H1 (cell line): ENCODE measurements at regions of chr16 and their contacts with region 1.

Region 1: DNA sequence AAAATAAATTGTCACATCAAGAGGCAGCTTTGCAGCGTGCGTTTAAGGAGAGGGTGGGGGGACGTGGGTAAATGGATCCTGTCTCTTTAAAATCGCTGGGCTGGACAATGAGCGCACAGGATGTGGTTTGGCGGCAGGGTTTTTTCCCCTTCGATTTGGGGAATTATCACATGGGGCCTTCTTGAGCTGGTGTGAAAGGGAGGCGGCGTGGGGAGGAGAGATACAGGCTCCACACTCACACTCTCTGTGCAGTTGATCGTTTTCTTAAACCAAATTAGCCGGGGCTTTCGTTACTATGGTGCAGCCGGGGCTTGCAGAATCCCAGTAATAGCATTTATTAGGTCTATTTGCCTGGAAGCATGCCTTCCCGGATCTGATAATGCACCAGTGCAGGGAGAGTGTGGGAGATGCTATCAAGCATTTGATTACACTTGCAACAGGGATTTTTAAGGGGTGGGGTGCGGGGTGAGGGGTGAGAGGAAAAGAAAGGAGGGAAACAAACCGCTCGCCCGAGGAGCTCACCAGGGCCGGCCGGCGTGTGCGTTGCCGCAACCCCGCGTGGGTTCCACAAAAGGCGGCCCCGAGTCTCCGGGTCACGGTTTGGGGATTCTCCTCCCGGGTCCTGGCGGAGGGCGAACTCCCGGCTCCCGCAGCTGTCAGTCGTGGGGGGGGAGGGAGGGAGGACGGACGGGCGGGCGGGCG is 58.9 kb upstream of the GSE1 start:
- DNase-seq: no peak
- H3K4me3 ChIP-seq: peak overlapping the region; percentile 54 to 98 (median 61)
- H3K27ac ChIP-seq: no peak overlapping the region
- H3K4me1 ChIP-seq: peaks cover 0 to 27% (median 21%) of the 10 kb centered on the region in 4 experiments; a peak in 6 of 7 replicates
- H3K27me3 ChIP-seq: no peaks in the 10 kb centered on the region; a peak in 2 of 7 replicates
- CTCF ChIP-seq: no peak
- EP300 ChIP-seq: no peak
- POLR2A ChIP-seq: no peak
- RAD21 ChIP-seq: no peak

Region 2: GRCh38 chr16:85461814-85462713 is 92.2 kb before region 1 on chr16:
- CTCF ChIA-PET with region 1: interaction called, 10 read pairs
- POLR2A ChIA-PET with region 1: interaction called, 3 read pairs
- DNase-seq: peak in 1 of 2 experiments; percentile 76
- H3K4me3 ChIP-seq: peak overlapping the region; percentile 4 to 57 (median 46)
- H3K27ac ChIP-seq: no peak overlapping the region
- H3K4me1 ChIP-seq: peaks cover 7 to 33% (median 25%) of the 10 kb centered on the region in 4 experiments
- H3K27me3 ChIP-seq: peaks cover 5 to 49% (median 36%) of the 10 kb centered on the region in 4 experiments; a peak in 6 of 7 replicates
- CTCF ChIP-seq: no peak
- EP300 ChIP-seq: no peak
- POLR2A ChIP-seq: no peak
- RAD21 ChIP-seq: no peak

Region 3: DNA sequence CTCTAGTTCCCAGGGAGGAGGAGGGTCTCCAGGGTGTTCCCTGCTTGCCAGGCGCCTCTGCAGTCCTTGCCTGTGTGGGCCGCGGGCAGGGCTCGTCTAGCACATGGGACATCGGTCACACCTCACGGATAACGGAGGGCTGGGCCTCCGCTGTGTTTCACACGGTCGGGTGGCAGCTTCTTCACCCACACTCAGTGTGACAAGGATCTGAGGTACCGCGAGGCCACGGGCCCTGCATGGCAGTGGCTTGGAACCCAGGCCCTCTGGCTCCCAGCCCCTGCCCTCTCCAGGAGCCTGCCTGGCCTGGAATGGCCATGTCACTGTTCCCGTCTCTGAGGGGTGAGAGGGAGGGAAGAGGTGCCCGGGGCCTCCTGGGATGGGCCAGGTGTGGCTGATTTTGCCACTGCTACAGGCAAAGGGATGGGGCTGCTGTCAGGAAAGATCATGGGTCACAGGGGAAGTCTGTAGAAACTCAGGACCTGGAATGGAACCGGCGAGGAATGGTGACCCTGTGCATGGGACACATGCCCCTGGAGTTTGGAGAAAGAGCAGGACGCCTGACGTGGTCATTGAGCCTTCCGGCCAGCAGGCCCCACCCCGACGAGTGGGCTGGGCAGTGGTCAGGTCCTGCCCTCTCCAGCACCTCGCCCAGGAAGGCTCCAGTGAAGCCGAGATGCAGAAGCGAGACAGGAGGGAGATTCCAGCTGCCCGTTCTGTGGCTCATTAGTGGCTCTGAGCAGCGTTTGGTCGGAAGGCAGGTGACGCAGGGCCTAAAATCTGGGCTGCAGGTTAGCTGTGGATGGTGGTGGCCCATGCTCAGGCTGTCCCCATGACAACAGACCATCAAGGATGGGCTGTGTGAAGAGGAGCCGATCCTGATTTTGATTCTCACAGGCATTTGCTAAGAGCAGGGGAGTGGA is 17.6 kb before region 1 on chr16:
- CTCF ChIA-PET with region 1: interaction called, 76 read pairs
- POLR2A ChIA-PET with region 1: interaction called, 6 read pairs
- DNase-seq: no peak
- H3K4me3 ChIP-seq: no peak overlapping the region
- H3K27ac ChIP-seq: no peak overlapping the region
- H3K4me1 ChIP-seq: peaks cover 0 to 5% (median 3%) of the 10 kb centered on the region in 4 experiments; a peak in 5 of 7 replicates
- H3K27me3 ChIP-seq: no peaks in the 10 kb centered on the region
- CTCF ChIP-seq: no peak
- EP300 ChIP-seq: no peak
- POLR2A ChIP-seq: no peak
- RAD21 ChIP-seq: no peak

Region 4: DNA sequence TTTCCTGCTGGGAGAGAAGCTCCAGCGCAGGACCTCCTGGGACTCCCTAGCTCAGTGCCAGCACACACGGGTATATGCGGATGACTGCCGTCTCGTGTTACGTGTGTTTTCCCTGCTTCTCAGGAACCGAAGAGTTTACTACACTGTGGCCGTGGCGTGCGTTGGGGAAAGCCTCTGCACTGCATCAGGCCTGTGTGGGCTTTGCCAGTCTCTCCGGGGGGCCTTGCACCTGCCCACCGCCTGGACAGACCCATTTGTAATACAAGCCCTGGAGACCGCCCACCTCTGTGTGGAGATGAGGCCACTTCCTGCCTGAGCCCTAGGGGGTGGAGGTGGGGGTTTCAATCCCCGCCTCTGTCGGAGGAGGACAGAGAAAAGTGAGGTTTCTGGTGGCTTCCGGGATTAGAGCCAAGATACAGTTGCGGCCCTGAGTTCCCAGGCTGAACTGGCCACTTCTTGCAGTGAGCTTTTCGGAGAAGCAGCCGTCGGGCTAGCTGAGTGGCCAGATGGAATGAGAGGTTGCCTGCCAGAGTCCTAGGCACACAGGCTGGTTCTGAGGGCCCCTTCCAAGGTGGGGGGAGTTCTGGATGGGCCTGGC is 15.5 kb after region 1 on chr16:
- CTCF ChIA-PET with region 1: interaction called, 39 read pairs
- POLR2A ChIA-PET with region 1: interaction called, 9 read pairs
- DNase-seq: no peak
- H3K4me3 ChIP-seq: no peak overlapping the region
- H3K27ac ChIP-seq: no peak overlapping the region; the same call in 1 of the 2 replicates
- H3K4me1 ChIP-seq: peaks cover 24 to 65% (median 41%) of the 10 kb centered on the region in 4 experiments
- H3K27me3 ChIP-seq: peaks cover 0 to 3% (median 0%) of the 10 kb centered on the region in 4 experiments; a peak in 2 of 7 replicates
- CTCF ChIP-seq: no peak
- EP300 ChIP-seq: 0 out of 3 replicates have a peak, but pooled peaks of 1 of the 2 experiments have one; percentile 22
- POLR2A ChIP-seq: no peak
- RAD21 ChIP-seq: no peak; a peak in 1 of 4 replicates

Region 5: GRCh38 chr16:85592700-85593493 is 38.6 kb after region 1 on chr16:
- CTCF ChIA-PET with region 1: interaction called, 11 read pairs
- POLR2A ChIA-PET with region 1: interaction called, 3 read pairs
- DNase-seq: no peak
- H3K4me3 ChIP-seq: no peak overlapping the region
- H3K27ac ChIP-seq: no peak overlapping the region
- H3K4me1 ChIP-seq: peaks cover 5 to 25% (median 17%) of the 10 kb centered on the region in 4 experiments
- H3K27me3 ChIP-seq: 0 out of 7 replicates have a peak, but pooled peaks cover 0 to 3% (median 0%) of the 10 kb centered on the region in 4 experiments
- CTCF ChIP-seq: no peak
- EP300 ChIP-seq: no peak
- POLR2A ChIP-seq: no peak
- RAD21 ChIP-seq: no peak

Region 6: DNA sequence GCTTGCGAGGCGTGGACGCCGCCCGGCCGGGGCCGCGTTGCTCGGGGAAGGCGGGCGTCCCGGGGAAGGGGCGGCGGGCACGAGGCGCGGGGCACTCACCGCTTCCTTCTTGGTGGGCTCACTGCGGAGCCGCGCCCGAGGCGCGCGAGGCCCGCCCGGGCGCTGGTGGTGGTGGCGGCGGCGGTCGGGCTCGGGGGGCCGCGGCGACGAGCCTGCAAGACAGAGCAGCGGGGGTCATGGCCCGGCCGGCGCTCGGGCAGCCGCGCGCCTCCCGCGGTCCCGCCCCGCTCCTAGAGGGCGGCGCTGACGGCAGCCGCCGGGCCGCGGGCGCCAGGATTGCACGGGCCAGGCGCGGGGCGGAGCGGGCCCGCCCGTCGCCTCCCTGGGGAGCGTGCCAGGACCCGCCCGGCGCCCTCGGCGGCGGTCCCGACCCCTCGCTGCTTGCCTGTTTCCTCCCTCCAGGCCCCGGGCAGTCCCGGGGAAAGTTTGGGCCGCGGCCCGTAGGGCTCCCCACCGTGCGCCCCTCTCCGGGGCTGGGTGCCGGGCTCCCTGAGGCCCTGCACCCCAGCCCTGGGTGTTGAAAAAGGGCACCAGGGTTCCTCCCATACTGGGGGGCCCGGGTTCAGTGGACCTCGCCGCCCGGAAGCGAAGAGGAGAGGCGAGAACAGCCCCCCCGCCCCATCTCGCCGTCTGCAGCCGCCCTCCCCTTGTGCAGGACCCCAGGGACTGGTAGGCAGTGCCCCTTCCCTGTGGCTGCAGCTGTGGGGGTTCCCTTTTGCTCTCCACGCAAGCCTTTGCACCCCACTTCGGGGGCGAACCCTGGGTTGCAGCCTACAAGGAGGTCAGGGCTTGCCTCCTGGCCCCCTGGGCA is 196.8 kb after region 1 on chr16 and contains the start of gene C16orf74:
- CTCF ChIA-PET with region 1: no interaction called
- POLR2A ChIA-PET with region 1: no interaction called
- DNase-seq: no peak
- H3K4me3 ChIP-seq: peak within 1 kb of the TSS; percentile 38 to 71 (median 60)
- H3K27ac ChIP-seq: no peak within 1 kb of the TSS
- H3K4me1 ChIP-seq: peaks cover 0 to 39% (median 30%) of the 10 kb centered on the region in 4 experiments; a peak in 6 of 7 replicates
- H3K27me3 ChIP-seq: peaks cover 3 to 34% (median 22%) of the 10 kb centered on the region in 4 experiments
- CTCF ChIP-seq: no peak
- EP300 ChIP-seq: no peak
- POLR2A ChIP-seq: no peak
- RAD21 ChIP-seq: no peak
- total RNA-seq, gene C16orf74: 6.1 and 7.3 TPM in 2 replicates